H1 (cell line): ENCODE measurements at regions of chr2 and their contacts with region 1.

Region 1: DNA sequence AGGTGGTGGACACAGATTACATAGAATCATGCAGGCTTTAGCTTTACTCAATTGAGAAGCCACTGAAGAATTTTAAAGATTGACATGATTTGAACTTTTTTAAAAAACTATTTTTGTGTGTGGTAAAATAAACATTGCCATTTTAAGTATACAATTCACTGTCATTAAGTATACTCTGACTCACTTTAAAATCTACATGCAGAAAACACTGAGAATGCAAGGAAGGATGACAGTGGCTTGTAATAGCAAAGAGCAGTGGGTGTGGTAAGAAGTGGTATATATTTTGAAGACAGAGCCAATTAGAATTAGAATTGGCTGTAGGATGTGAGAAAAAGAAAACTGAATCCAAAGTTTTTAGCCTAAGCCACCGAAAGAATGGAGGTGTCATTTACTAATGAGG is 14.9 kb downstream of the TRMT61B start:
- DNase-seq: no peak
- H3K4me3 ChIP-seq: no peak overlapping the region
- H3K27ac ChIP-seq: no peak overlapping the region
- H3K4me1 ChIP-seq: no peaks in the 10 kb centered on the region
- H3K27me3 ChIP-seq: no peaks in the 10 kb centered on the region
- CTCF ChIP-seq: no peak
- EP300 ChIP-seq: no peak
- POLR2A ChIP-seq: no peak
- RAD21 ChIP-seq: no peak

Region 2: GRCh38 chr2:28810384-28811285 is 44.6 kb before region 1 on chr2 and contains the start of gene SPDYA:
- CTCF ChIA-PET with region 1: no interaction called
- POLR2A ChIA-PET with region 1: no interaction called
- DNase-seq: peak; percentile 34 to 86
- H3K4me3 ChIP-seq: peak within 1 kb of the TSS; percentile 23 to 70 (median 63)
- H3K27ac ChIP-seq: no peak within 1 kb of the TSS
- H3K4me1 ChIP-seq: peaks cover 0 to 3% (median 0%) of the 10 kb centered on the region in 4 experiments; a peak in 2 of 7 replicates
- H3K27me3 ChIP-seq: peaks cover 9 to 18% (median 11%) of the 10 kb centered on the region in 4 experiments
- CTCF ChIP-seq: no peak
- EP300 ChIP-seq: no peak
- POLR2A ChIP-seq: no peak
- RAD21 ChIP-seq: no peak
- total RNA-seq, gene SPDYA: 0.27 and 0.35 TPM in 2 replicates

Region 3: GRCh38 chr2:28870146-28870891 is 15.1 kb after region 1 on chr2 and contains the start of gene TRMT61B:
- CTCF ChIA-PET with region 1: interaction called, 4 read pairs
- POLR2A ChIA-PET with region 1: interaction called, 13 read pairs
- DNase-seq: peak; percentile 88 to 99
- H3K4me3 ChIP-seq: peak within 1 kb of the TSS; percentile 75 to 87 (median 84)
- H3K27ac ChIP-seq: peak within 1 kb of the TSS; percentile 76
- H3K4me1 ChIP-seq: no peaks in the 10 kb centered on the region; a peak in 1 of 7 replicates
- H3K27me3 ChIP-seq: no peaks in the 10 kb centered on the region
- CTCF ChIP-seq: no peak
- EP300 ChIP-seq: 0 out of 3 replicates have a peak, but pooled peaks of 1 of the 2 experiments have one; percentile 72
- POLR2A ChIP-seq: peak; percentile 96
- RAD21 ChIP-seq: no peak
- total RNA-seq, gene TRMT61B: 27.8 and 30.1 TPM in 2 replicates